ENCODE measurements at regions of chr12 and their contacts with region 1.

Region 1: GRCh38 chr12:129530984-129531383 is 372.8 kb downstream of the TMEM132D start:
- DNase-seq: no peak
- ATAC-seq: no peak
- H3K4me3 ChIP-seq: no peak overlapping the region
- H3K27ac ChIP-seq: no peak overlapping the region; the same call in 1 of the 2 replicates
- H3K4me1 ChIP-seq: no peaks in the 10 kb centered on the region
- H3K27me3 ChIP-seq: no peaks in the 10 kb centered on the region
- CTCF ChIP-seq: no peak
- EP300 ChIP-seq: no peak
- POLR2A ChIP-seq: no peak
- RAD21 ChIP-seq: no peak

Region 2: GRCh38 chr12:129564768-129565167 is 33.8 kb after region 1 on chr12:
- CTCF ChIA-PET with region 1: no interaction called
- POLR2A ChIA-PET with region 1: no interaction called
- RAD21 ChIA-PET with region 1: no interaction called
- SMC1A ChIA-PET with region 1: no interaction called
- in situ Hi-C with region 1: no loop called
- intact Hi-C with region 1: loop called (anchors 1 kb)
- DNase-seq: peak; percentile 63
- ATAC-seq: peak; percentile 64
- H3K4me3 ChIP-seq: no peak overlapping the region
- H3K27ac ChIP-seq: no peak overlapping the region
- H3K4me1 ChIP-seq: no peaks in the 10 kb centered on the region
- H3K27me3 ChIP-seq: no peaks in the 10 kb centered on the region
- CTCF ChIP-seq: peak in 1 of 3 experiments; percentile 8; a peak in 1 of 6 replicates
- EP300 ChIP-seq: peak in 1 of 2 experiments; percentile 54; a peak in 1 of 4 replicates
- POLR2A ChIP-seq: no peak
- RAD21 ChIP-seq: 0 out of 2 replicates have a peak, but pooled peaks have one; percentile 7

Measured in GM12878 (cell line).